Sigmoid colon (tissue), 7 donors: ENCODE measurements at regions of chr6 and their contacts with region 1.

Region 1: DNA sequence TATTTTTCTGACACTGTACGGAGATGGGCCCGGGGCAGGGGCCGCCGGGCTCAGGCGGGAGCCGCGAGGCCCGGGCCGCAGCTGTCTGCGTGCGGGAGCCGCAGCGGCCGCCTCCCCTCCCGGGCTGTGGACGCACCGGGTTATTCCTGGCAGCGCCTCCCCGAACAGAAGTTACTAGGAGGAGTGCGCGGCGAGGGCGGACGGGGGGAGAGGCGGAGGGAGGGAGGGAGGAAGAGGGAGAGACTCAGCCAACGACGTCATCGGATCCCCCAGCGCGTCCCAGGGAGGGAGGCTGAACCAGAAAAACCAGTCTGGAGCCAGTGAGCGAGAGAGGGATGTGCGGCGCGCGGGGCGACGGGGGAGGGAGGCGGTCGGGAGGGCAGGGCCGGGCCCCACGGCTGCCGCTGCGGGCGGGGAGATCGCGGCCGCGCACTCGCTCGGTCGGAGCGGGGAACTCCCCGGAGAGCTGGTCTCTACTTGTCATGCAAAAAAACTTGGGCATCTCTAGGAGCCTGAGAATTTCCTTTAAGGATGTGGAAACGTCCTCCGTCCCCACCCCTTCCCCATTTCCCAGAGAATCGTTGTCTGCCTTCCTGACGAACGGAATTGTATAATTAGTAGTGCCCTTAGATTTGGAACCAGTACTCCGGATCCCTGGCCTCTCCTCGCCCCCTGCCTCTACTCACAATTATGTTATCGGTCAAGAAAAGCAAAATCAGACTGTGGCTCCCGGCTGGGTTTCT is 1.4 kb upstream of the HIVEP2 start:
- DNase-seq: peak; percentile 100
- H3K4me3 ChIP-seq: peak overlapping the region; percentile 55 to 92 (median 78)
- H3K27ac ChIP-seq: peak overlapping the region; percentile 95 to 99 (median 99)
- H3K4me1 ChIP-seq: peaks cover 0 to 19% (median 17%) of the 10 kb centered on the region in 4 donors
- H3K27me3 ChIP-seq: no peaks in the 10 kb centered on the region
- CTCF ChIP-seq: no peak
- EP300 ChIP-seq: peak in 2 of 4 donors; percentile 35 to 50
- POLR2A ChIP-seq: peak; percentile 38 to 53

Region 2: GRCh38 chr6:142692942-142693341 is 253.4 kb before region 1 on chr6:
- intact Hi-C with region 1: loop called (anchors 5 kb)
- DNase-seq: peak; percentile 82
- H3K4me3 ChIP-seq: no peak overlapping the region
- H3K27ac ChIP-seq: no peak overlapping the region
- H3K4me1 ChIP-seq: peaks cover 0 to 34% (median 20%) of the 10 kb centered on the region in 4 donors
- H3K27me3 ChIP-seq: no peaks in the 10 kb centered on the region
- CTCF ChIP-seq: peak; percentile 78 to 96 (median 94)
- EP300 ChIP-seq: no peak
- POLR2A ChIP-seq: no peak

Region 3: DNA sequence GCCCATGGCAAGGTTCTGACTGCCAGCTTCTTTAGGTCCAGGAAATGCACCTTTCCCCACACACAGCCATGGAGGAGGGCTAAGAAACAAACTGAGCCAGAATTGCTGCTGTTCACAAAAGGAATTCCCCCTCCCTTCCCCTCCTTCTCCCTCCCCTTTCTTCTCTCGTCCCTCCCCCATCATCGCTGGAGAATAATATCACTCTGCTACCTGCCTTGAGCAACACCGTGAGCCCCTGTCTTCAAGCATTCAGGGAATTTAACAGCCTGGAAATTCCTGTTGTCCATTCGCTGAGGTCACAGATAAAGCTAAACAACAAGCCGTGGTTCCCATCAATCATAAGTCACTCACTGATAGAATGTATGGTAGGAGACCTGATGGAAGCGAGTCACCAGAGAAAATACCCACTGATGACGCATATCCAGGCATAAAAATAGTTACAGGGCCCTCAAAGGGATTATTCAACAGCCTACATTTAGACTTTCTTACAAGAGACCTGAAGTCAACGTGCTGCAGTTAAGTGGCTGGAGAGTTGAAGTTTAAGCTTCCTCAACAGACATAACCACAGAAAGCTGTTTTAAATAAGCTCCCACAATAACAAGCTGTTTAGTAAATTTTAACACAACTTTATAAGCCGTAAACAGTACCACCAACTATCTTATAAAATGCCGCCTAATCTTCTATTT is 61.0 kb before region 1 on chr6:
- intact Hi-C with region 1: loop called (anchors 5 kb)
- DNase-seq: no peak
- H3K4me3 ChIP-seq: peak overlapping the region; percentile 16 to 43 (median 35)
- H3K27ac ChIP-seq: peak overlapping the region in 3 of 4 donors; percentile 54 to 66 (median 55)
- H3K4me1 ChIP-seq: peaks cover 0 to 39% (median 28%) of the 10 kb centered on the region in 4 donors
- H3K27me3 ChIP-seq: no peaks in the 10 kb centered on the region
- CTCF ChIP-seq: no peak
- EP300 ChIP-seq: peak in 3 of 4 donors; percentile 44 to 81 (median 60)
- POLR2A ChIP-seq: no peak

Region 4: DNA sequence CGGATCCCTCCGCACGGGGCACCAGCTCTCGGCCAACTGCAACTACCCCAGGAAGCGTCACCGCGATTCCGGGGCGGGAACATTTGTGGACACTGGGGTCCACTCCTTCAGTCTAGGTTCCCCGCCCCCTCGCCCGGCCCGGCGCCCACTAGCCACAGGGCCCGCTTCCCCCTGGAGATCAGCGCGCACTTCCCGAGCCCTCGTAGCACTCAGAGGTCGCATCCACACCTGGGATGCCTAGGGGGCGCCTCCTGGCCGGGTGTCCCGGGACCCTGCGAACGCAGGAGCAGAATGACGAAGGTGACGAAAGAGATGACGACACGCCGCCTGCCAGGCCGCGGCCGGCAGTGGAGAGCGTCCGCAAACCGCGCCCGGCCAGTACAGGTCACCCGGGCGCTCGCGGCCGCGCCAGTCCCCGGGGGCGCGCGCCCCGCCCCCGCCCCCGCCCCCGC is 114.0 kb after region 1 on chr6:
- intact Hi-C with region 1: loop called (anchors 1 kb)
- DNase-seq: peak; percentile 91
- H3K4me3 ChIP-seq: peak overlapping the region; percentile 70 to 93 (median 84)
- H3K27ac ChIP-seq: peak overlapping the region; percentile 83 to 92 (median 89)
- H3K4me1 ChIP-seq: peaks cover 0 to 19% (median 11%) of the 10 kb centered on the region in 4 donors
- H3K27me3 ChIP-seq: no peaks in the 10 kb centered on the region
- CTCF ChIP-seq: no peak
- EP300 ChIP-seq: peak in 1 of 4 donors; percentile 58
- POLR2A ChIP-seq: peak in 1 of 2 donors; percentile 35

Region 5: DNA sequence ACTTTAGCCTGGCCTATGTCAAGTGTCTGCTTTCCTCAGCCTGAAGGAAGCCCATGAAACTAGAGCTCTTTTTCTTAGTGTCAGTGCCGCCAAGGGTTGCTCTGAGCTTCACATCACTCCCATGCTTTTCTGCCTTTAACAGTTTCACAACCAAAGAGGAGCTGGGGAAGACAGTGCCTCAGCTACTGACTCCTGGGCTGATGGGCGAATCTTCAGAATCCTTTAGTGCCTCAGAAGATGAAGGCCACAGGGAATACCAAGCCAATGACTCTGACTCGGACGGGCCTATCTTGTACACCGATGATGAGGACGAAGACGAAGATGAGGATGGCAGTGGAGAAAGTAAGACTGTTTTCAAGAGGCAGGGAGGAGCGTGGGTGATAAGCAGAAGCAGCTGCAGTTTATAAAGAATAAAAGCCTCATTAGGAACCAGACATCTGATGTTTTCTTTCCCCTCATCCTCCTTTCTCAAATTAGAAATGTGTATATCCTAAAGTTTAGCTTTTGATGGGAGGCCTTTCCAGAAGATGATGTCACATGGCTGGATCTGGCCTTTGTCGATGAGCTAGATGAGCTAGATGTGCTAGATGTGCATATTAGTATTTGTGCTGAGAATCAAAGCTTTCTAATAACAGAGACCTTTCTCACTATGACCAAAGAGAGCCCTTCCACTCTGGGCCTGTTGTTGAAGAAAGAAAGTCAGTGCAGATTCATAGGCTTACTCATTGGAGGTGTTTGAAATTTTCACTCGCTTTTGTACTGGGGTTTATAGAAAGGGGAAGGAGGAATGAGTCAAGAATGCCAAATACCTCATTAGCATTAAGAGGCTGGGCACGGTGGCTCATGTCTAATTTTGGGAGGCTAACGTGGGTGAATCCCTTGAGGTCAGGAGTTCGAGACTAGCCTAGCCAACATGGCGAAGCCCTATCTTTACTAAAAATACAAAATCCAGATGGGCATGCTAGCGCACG is 826.0 kb after region 1 on chr6:
- intact Hi-C with region 1: loop called (anchors 10 kb)
- DNase-seq: no peak
- H3K4me3 ChIP-seq: no peak overlapping the region
- H3K27ac ChIP-seq: peak overlapping the region; percentile 19 to 59 (median 50)
- H3K4me1 ChIP-seq: peaks cover 0 to 45% (median 31%) of the 10 kb centered on the region in 4 donors
- H3K27me3 ChIP-seq: no peaks in the 10 kb centered on the region
- CTCF ChIP-seq: no peak
- EP300 ChIP-seq: no peak
- POLR2A ChIP-seq: no peak

Region 6: GRCh38 chr6:144321839-144322591 is 1375.7 kb after region 1 on chr6:
- intact Hi-C with region 1: no loop called
- DNase-seq: no peak
- H3K4me3 ChIP-seq: no peak overlapping the region
- H3K27ac ChIP-seq: no peak overlapping the region
- H3K4me1 ChIP-seq: no peaks in the 10 kb centered on the region
- H3K27me3 ChIP-seq: no peaks in the 10 kb centered on the region
- CTCF ChIP-seq: no peak
- EP300 ChIP-seq: no peak
- POLR2A ChIP-seq: no peak